ENCODE measurements at regions of chr2 and their contacts with region 1.

Region 1: GRCh38 chr2:174682578-174683391 is 81.5 kb downstream of the CHRNA1 start:
- DNase-seq: peak; percentile 51
- H3K4me3 ChIP-seq: peak overlapping the region; percentile 83
- H3K27ac ChIP-seq: peak overlapping the region; percentile 71 to 76
- H3K4me1 ChIP-seq: no peaks in the 10 kb centered on the region
- H3K27me3 ChIP-seq: no peaks in the 10 kb centered on the region
- CTCF ChIP-seq: no peak
- POLR2A ChIP-seq: no peak

Region 2: DNA sequence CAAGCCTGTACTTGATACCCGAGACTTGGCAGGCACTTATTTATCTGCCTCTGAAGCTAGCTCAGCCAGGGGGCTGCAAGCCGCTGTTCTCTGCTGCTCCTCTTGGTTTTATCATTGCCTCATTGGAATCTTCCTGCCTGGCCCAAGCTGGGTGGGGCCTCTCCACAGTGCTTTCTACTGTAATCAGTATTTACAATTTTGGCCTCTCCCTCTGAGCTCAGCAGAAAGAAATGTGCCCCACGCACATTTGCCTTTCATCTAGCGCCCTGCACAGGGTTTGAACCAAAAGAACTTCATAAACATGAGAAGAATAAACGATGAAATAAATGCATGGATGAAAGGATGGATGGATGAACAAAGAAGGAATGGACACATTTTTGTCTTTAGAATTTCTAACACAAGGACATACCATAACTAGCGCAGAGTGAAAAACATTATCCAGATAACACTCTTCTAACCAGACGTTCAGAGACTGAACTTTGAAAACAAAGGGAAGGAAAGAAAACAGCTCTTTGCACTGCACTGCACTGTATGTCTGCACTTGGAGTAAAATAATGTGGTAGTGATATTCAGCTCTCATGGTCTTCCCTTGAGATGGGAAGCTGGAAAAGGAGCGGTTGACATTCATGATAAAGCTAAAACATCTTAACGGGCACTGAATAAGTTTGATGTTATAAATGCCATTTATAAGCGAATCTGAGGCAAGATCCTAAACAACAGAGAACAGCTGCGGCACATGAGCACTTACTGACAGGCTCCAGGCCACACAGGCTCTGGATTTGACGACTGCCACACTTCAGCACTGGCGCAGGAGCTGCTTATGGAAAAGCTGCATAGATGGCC is 630.8 kb before region 1 on chr2:
- intact Hi-C with region 1: no loop called
- DNase-seq: no peak
- H3K4me3 ChIP-seq: no peak overlapping the region
- H3K27ac ChIP-seq: no peak overlapping the region
- H3K4me1 ChIP-seq: no peaks in the 10 kb centered on the region
- H3K27me3 ChIP-seq: no peaks in the 10 kb centered on the region
- CTCF ChIP-seq: no peak
- POLR2A ChIP-seq: no peak

Region 3: DNA sequence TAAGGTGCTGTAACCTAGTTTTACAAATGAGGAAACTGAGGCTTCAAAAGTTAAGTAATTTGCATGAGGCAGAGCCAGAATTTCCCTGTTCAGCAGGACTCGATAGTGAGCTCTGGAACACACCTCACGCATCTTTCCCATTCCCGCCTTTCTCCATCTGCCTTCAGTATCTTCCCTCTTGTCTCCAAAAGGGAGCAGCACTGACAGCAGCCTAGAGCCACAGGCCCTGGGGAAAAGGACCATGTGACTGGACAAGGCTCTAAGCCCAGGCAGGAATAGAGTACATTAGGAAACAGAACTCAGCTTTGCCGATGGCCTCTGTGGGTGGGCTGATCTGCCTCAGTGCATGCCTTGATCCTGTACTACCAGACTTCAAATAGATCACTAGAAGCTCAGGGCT is 217.5 kb before region 1 on chr2:
- intact Hi-C with region 1: loop called (anchors 2 kb)
- DNase-seq: no peak
- H3K4me3 ChIP-seq: no peak overlapping the region
- H3K27ac ChIP-seq: no peak overlapping the region
- H3K4me1 ChIP-seq: no peaks in the 10 kb centered on the region
- H3K27me3 ChIP-seq: no peaks in the 10 kb centered on the region
- CTCF ChIP-seq: no peak
- POLR2A ChIP-seq: no peak

Region 4: GRCh38 chr2:174499371-174499770 is 183.4 kb before region 1 on chr2:
- intact Hi-C with region 1: no loop called
- DNase-seq: no peak
- H3K4me3 ChIP-seq: no peak overlapping the region
- H3K27ac ChIP-seq: no peak overlapping the region
- H3K4me1 ChIP-seq: no peaks in the 10 kb centered on the region
- H3K27me3 ChIP-seq: no peaks in the 10 kb centered on the region
- CTCF ChIP-seq: no peak
- POLR2A ChIP-seq: no peak

Region 5: GRCh38 chr2:174603280-174603679 is 79.5 kb before region 1 on chr2:
- intact Hi-C with region 1: loop called (anchors 5 kb)
- DNase-seq: peak; percentile 55
- H3K4me3 ChIP-seq: no peak overlapping the region
- H3K27ac ChIP-seq: no peak overlapping the region
- H3K4me1 ChIP-seq: peaks cover 8% of the 10 kb centered on the region
- H3K27me3 ChIP-seq: no peaks in the 10 kb centered on the region
- CTCF ChIP-seq: peak in 2 of 4 experiments; percentile 39 to 58
- POLR2A ChIP-seq: no peak

Measured in prostate gland (tissue), 2 donors.